Activated B cell treated with CpG ODN at 0.5 μM for 24 hours (primary cell): ENCODE measurements at regions of chr2 and their contacts with region 1.

Region 1: GRCh38 chr2:179020156-179020750 is 29.7 kb downstream of the CCDC141 start:
- DNase-seq: peak; percentile 31
- ATAC-seq: peak; percentile 64
- H3K4me3 Mint-ChIP-seq: no peak overlapping the region
- H3K27ac Mint-ChIP-seq: peak overlapping the region; percentile 46
- H3K4me1 Mint-ChIP-seq: peaks cover 52% of the 10 kb centered on the region
- H3K27me3 Mint-ChIP-seq: no peaks in the 10 kb centered on the region
- CTCF ChIP-seq: no peak

Region 2: DNA sequence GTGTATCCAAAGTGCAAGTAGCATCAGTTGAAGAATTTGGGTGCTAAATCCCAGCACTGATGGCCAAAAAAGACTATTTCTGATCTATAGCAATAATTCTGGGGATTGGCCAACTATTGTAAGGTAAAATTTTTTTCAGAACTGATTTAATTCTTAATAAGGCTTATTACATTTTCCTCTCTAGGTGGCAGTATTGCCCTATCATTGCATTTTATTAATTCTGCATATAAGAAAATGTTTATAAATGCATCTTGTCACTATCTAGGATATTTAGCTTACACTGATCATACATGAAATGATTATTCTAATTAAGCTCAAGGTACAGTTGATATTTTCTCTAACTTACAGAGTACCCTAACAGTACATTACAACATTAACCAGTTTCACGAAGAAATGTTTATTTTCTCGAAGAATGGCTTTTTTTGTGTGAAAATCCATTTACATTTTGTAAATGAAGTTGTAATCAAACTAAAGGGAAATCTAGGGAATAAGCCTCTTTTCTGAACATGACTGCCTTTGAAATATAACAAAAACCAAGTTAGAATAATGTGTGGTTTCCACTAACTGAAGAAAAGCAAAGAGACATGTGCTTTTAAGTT is 224.1 kb before region 1 on chr2:
- CTCF ChIA-PET with region 1: interaction called, 7 read pairs
- POLR2A ChIA-PET with region 1: no interaction called
- intact Hi-C with region 1: loop called (anchors 1 kb)
- DNase-seq: no peak
- ATAC-seq: no peak
- H3K4me3 Mint-ChIP-seq: no peak overlapping the region
- H3K27ac Mint-ChIP-seq: no peak overlapping the region
- H3K4me1 Mint-ChIP-seq: no peaks in the 10 kb centered on the region
- H3K27me3 Mint-ChIP-seq: no peaks in the 10 kb centered on the region
- CTCF ChIP-seq: no peak

Region 3: DNA sequence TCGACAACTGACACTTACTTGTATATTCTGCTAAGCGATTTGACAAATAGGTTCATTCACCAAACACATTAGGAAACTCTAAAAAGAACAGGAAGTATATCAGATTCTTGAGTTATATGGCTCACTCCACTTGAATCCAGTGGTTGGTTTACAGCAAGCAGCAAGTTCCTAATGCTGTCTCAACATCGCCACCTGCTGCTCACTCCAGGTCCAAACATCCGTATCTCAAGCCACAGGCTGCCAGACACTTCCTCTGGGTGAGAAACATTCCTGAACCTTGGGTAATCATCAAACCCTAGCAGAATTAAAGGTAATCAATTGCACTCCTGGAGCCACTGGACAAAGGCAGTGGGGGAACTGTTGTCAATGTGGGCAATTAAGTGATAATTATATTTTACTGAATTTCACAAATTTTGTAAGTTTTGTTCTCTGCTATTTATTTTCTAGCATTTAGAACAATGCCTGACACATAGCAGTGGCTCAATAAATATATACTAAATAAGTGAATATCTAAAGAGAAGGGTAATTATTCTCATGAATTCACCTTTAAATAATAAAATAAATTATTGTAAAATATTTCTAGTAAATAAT is 105.9 kb before region 1 on chr2:
- CTCF ChIA-PET with region 1: interaction called, 12 read pairs
- POLR2A ChIA-PET with region 1: no interaction called
- intact Hi-C with region 1: no loop called
- DNase-seq: peak; percentile 37
- ATAC-seq: peak; percentile 93
- H3K4me3 Mint-ChIP-seq: no peak overlapping the region
- H3K27ac Mint-ChIP-seq: no peak overlapping the region
- H3K4me1 Mint-ChIP-seq: peaks cover 2% of the 10 kb centered on the region
- H3K27me3 Mint-ChIP-seq: no peaks in the 10 kb centered on the region
- CTCF ChIP-seq: no peak

Region 4: GRCh38 chr2:179031731-179032408 is 11.6 kb after region 1 on chr2:
- CTCF ChIA-PET with region 1: interaction called, 36 read pairs
- POLR2A ChIA-PET with region 1: interaction called, 19 read pairs
- intact Hi-C with region 1: loop called (anchors 1 kb)
- DNase-seq: no peak
- ATAC-seq: peak; percentile 85
- H3K4me3 Mint-ChIP-seq: peak overlapping the region; percentile 76
- H3K27ac Mint-ChIP-seq: peak overlapping the region; percentile 89
- H3K4me1 Mint-ChIP-seq: peaks cover 25% of the 10 kb centered on the region
- H3K27me3 Mint-ChIP-seq: no peaks in the 10 kb centered on the region
- CTCF ChIP-seq: no peak

Region 5: GRCh38 chr2:179096090-179096489 is 75.8 kb after region 1 on chr2:
- CTCF ChIA-PET with region 1: interaction called, 3 read pairs
- POLR2A ChIA-PET with region 1: interaction called, 8 read pairs
- intact Hi-C with region 1: loop called (anchors 1 kb)
- DNase-seq: no peak
- ATAC-seq: peak; percentile 85
- H3K4me3 Mint-ChIP-seq: peak overlapping the region; percentile 64
- H3K27ac Mint-ChIP-seq: peak overlapping the region; percentile 73
- H3K4me1 Mint-ChIP-seq: peaks cover 57% of the 10 kb centered on the region
- H3K27me3 Mint-ChIP-seq: no peaks in the 10 kb centered on the region
- CTCF ChIP-seq: no peak

Region 6: DNA sequence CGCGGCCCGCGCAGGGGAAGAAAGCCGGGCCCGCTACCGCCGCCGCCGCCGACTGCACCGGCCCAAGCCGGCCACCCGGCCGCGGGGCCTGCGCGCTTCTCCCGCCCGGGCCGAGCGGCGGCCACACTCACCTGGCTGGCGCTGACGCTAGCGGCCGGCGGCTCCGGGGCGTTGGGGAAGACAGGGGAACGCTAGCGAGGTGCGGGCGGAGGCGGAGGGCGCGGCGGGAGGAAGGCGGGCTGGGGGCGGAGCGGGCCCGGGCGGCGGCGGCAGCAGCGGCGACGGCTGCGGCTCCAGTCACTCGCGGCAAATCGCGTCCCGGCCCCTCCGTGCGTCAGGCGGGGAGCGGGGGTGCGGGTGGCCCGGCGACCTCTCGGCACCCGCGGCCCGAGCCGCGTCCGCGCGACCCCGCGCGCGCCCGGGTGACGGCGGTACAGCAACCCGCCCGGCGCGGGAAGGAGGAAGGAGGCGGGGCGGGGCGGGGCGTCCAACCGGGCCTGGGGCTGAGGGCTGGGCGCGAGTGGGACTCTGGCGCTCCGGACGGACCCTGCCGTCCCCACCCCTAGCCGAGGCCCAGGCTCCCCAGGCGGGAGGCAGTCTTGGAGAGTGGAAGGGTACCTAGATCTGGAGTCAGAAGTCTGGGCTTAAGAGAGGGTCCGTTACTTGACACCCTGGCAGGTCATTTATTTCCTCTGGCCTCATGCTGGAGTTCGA is 244.3 kb after region 1 on chr2 and contains the start of gene SESTD1:
- CTCF ChIA-PET with region 1: no interaction called
- POLR2A ChIA-PET with region 1: no interaction called
- intact Hi-C with region 1: loop called (anchors 5 kb)
- DNase-seq: peak; percentile 75
- ATAC-seq: peak; percentile 80
- H3K4me3 Mint-ChIP-seq: peak within 1 kb of the TSS; percentile 91
- H3K27ac Mint-ChIP-seq: peak within 1 kb of the TSS; percentile 86
- H3K4me1 Mint-ChIP-seq: peaks cover 53% of the 10 kb centered on the region
- H3K27me3 Mint-ChIP-seq: no peaks in the 10 kb centered on the region
- CTCF ChIP-seq: no peak
- total RNA-seq, gene SESTD1: 49.2 and 49.6 TPM in 2 replicates